ENCODE measurements at regions of chr11 and their contacts with region 1.

Region 1: DNA sequence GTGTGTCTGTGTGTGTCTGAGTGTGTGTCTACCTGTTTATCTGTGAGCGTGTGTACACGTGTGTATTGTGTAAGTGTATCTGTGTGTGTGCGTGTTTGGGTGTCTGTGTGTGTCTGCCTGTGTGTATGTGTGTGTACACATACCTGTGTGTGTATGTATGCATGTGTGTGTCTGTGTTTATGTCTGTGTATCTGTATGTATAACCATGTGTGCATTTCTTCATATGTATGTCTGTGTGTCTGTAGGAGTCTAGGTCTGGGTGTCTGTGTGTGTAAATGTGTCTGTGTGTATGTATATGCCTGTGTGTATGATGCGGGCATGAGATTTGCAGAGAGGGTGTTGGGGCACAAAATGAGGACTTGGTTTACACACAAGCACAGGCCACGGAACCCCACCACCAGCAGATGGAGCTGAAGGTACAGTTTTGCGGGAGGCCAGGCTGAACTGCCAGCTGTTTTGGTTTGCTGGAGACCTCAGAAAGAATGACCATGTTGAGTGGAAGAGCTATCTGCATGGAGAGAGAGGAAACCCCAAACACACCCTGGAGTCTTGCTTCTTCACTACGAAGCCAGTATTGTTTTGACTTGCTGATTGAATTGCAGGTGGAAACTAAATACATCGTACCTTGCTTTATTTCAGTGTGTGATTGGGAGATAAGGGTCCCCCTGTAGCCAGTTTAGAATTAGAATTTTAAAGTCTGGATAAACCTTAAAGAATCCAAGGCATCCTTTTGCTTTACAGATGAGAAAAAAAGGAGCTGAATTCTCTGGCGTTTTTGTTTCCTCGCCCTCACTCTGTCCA is 497.2 kb downstream of the NTM start:
- DNase-seq: peak; percentile 80
- H3K4me3 ChIP-seq: no peak overlapping the region
- H3K27ac ChIP-seq: no peak overlapping the region
- H3K4me1 ChIP-seq: peaks cover 36% of the 10 kb centered on the region
- H3K27me3 ChIP-seq: no peaks in the 10 kb centered on the region
- CTCF ChIP-seq: peak; percentile 85 to 88
- POLR2A ChIP-seq: no peak

Region 2: GRCh38 chr11:131688051-131688698 is 179.5 kb before region 1 on chr11:
- CTCF ChIA-PET with region 1: interaction called, 105 read pairs
- POLR2A ChIA-PET with region 1: no interaction called
- dilution Hi-C with region 1: no loop called
- intact Hi-C with region 1: no loop called
- DNase-seq: peak; percentile 54
- H3K4me3 ChIP-seq: no peak overlapping the region
- H3K27ac ChIP-seq: no peak overlapping the region
- H3K4me1 ChIP-seq: no peaks in the 10 kb centered on the region
- H3K27me3 ChIP-seq: peaks cover 0 to 2% of the 10 kb centered on the region in 2 experiments
- CTCF ChIP-seq: peak; percentile 90 to 95
- POLR2A ChIP-seq: no peak

Region 3: GRCh38 chr11:131841028-131841427 is 26.6 kb before region 1 on chr11:
- CTCF ChIA-PET with region 1: interaction called, 12 read pairs
- POLR2A ChIA-PET with region 1: no interaction called
- dilution Hi-C with region 1: no loop called
- intact Hi-C with region 1: no loop called
- DNase-seq: peak; percentile 61
- H3K4me3 ChIP-seq: no peak overlapping the region
- H3K27ac ChIP-seq: no peak overlapping the region
- H3K4me1 ChIP-seq: peaks cover 23% of the 10 kb centered on the region
- H3K27me3 ChIP-seq: no peaks in the 10 kb centered on the region
- CTCF ChIP-seq: no peak
- POLR2A ChIP-seq: no peak

Region 4: DNA sequence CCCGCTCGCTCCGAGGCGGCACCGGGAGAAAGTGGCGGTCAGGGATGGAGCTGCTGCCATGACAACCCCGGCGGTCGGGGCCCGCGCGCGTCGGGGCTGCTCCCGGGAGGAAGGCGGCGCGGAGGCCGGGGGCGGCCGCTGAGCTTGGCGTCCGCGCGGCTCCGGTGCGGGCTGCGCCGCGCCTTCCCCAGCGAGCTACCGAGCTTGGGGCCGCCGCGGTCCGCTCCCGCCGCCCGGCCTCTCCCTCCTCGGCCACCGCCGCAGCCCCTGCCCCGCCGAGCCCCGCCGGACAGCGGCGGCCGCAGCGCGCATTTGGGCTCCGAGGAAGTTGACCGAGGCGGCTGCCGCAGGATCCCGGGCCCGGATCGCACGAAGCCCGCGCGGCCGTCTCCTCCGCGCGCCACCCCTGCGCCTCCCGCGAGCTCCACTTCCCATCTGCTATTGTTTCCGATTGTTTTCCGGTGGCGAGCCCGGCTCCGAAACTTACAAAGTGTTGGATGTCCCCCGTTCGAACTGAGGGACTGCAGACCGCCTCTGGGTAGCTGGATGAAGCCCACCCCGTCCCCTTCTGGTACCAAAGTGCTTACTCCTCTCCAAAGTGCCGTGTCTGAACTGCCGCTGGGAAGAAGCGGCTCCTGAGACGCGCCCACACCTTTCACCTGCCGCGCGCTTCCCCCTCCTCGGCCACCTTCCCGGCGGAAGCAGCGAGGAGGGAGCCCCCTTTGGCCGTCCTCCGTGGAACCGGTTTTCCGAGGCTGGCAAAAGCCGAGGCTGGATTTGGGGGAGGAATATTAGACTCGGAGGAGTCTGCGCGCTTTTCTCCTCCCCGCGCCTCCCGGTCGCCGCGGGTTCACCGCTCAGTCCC is 43.1 kb after region 1 on chr11:
- CTCF ChIA-PET with region 1: interaction called, 227 read pairs
- POLR2A ChIA-PET with region 1: interaction called, 5 read pairs
- dilution Hi-C with region 1: no loop called
- intact Hi-C with region 1: loop called (anchors 1 kb)
- DNase-seq: peak; percentile 43
- H3K4me3 ChIP-seq: peak overlapping the region; percentile 49 to 76 (median 64)
- H3K27ac ChIP-seq: peak overlapping the region; percentile 19
- H3K4me1 ChIP-seq: peaks cover 5% of the 10 kb centered on the region
- H3K27me3 ChIP-seq: peaks cover 0 to 10% of the 10 kb centered on the region in 2 experiments
- CTCF ChIP-seq: no peak
- POLR2A ChIP-seq: no peak

Region 5: DNA sequence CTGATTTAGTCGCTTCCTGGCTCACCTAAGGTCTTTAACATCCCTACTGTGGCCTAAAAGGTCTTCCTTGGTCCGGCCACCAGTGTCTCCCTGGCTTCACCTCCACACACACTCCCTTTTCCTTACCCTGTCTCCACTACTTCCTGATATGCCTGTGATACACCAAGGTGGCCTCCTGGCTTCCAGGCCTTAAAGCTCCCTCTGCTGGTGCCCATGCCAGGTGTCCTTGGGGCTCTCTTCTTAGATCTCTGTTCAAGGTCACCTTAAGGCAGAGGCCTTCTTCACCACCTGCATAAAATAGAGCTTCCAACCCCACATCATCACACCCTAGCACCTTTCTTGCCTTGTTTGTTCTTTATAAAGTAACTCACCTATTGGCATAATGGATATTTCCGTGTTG is 290.4 kb after region 1 on chr11:
- CTCF ChIA-PET with region 1: interaction called, 7 read pairs
- POLR2A ChIA-PET with region 1: no interaction called
- dilution Hi-C with region 1: no loop called
- intact Hi-C with region 1: loop called (anchors 1 kb)
- DNase-seq: peak; percentile 32
- H3K4me3 ChIP-seq: no peak overlapping the region
- H3K27ac ChIP-seq: no peak overlapping the region
- H3K4me1 ChIP-seq: no peaks in the 10 kb centered on the region
- H3K27me3 ChIP-seq: no peaks in the 10 kb centered on the region
- CTCF ChIP-seq: peak; percentile 21 to 42
- POLR2A ChIP-seq: no peak

Region 6: GRCh38 chr11:133064152-133064877 is 1196.7 kb after region 1 on chr11:
- CTCF ChIA-PET with region 1: interaction called, 13 read pairs
- POLR2A ChIA-PET with region 1: no interaction called
- dilution Hi-C with region 1: no loop called
- intact Hi-C with region 1: loop called (anchors 1 kb)
- DNase-seq: peak; percentile 48
- H3K4me3 ChIP-seq: peak overlapping the region; percentile 14 to 64 (median 42)
- H3K27ac ChIP-seq: peak overlapping the region; percentile 12
- H3K4me1 ChIP-seq: peaks cover 8% of the 10 kb centered on the region
- H3K27me3 ChIP-seq: no peaks in the 10 kb centered on the region
- CTCF ChIP-seq: peak; percentile 63 to 68
- POLR2A ChIP-seq: no peak